Right ventricle myocardium inferior (tissue), 1 donor: ENCODE measurements at regions of chr5 and their contacts with region 1.

Region 1: GRCh38 chr5:40736103-40736875 is 19.5 kb downstream of the TTC33 start:
- DNase-seq: no peak
- ATAC-seq: peak; percentile 42

Region 2: DNA sequence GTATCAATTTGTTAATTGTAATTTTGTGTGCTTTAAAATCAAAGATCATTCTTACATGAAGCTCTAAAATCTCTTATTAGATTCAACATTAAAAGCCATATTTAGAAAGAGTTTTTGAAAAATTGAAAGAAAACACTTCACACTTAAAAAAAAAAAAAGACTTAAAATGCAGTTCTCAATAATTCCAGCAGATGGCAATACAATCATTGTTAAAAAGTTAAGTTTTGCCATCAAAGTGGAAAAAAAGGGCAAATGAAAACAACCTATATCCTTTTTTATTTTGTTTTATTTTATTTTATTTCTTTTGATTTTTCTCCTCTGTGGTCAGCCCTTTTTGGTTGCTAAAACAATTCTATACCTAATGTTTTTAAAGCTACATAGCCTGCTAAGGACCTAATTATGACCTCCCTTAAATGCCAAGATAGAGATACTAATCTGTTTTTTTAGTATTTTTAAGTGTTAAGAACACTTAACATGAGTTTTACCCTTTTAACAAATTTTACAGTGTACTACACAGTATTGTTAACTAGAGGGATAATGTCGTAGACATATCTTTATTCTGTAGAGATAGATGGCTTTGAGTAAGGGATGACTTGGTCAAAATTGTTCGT is 1157.3 kb before region 1 on chr5:
- intact Hi-C with region 1: loop called (anchors 10 kb)
- DNase-seq: no peak
- ATAC-seq: no peak

Region 3: DNA sequence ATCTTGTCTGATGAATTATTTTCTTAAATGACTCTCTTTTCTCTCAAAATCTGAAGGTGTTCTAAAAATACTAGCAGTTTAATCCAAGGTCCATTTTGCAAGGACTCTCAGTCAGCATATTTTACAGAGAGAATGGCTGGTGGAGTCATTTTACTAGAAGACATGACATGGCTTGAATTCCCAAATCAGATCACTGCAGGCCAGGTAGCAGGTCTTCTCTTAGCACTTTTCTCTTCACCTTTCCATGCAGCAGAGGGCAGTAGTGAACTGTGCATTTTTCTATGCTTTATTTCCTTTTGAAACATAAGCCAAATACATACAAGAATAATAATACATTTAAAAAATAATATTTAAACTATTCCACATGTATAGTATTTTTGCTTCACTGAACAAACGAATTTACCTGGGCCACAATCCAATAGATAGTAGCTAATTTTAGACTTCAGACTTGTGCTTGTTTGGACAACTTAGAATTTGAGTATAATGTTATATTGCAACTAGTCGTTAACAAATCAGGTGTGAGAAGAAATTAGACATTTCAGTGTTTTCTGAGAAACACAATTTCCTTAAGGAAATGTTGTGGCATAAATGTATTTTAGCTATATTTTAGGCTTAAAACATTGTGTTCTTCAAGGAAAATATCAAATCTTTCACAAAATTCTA is 1022.1 kb before region 1 on chr5:
- intact Hi-C with region 1: loop called (anchors 10 kb)
- DNase-seq: no peak
- ATAC-seq: peak; percentile 52

Region 4: GRCh38 chr5:39948867-39949468 is 787.3 kb before region 1 on chr5:
- intact Hi-C with region 1: loop called (anchors 5 kb)
- DNase-seq: no peak
- ATAC-seq: no peak